Activated CD4-positive, alpha-beta memory T cell treated with anti-CD3 and anti-CD28 coated beads for 36 hours (primary cell): ENCODE measurements at regions of chr12 and their contacts with region 1.

Region 1: GRCh38 chr12:71840231-71840847 is 780 bp downstream of the TBC1D15 start:
- DNase-seq: peak; percentile 18
- H3K4me3 Mint-ChIP-seq: peak overlapping the region; percentile 97
- H3K27ac Mint-ChIP-seq: peak overlapping the region; percentile 99
- H3K4me1 Mint-ChIP-seq: peaks cover 32% of the 10 kb centered on the region
- H3K27me3 Mint-ChIP-seq: no peaks in the 10 kb centered on the region

Region 2: GRCh38 chr12:70242695-70243509 is 1597.4 kb before region 1 on chr12 and contains the start of gene CNOT2:
- CTCF ChIA-PET with region 1: no interaction called
- POLR2A ChIA-PET with region 1: no interaction called
- intact Hi-C with region 1: loop called (anchors 10 kb)
- DNase-seq: peak; percentile 94
- H3K4me3 Mint-ChIP-seq: peak within 1 kb of the TSS; percentile 99
- H3K27ac Mint-ChIP-seq: peak within 1 kb of the TSS; percentile 100
- H3K4me1 Mint-ChIP-seq: peaks cover 55% of the 10 kb centered on the region
- H3K27me3 Mint-ChIP-seq: no peaks in the 10 kb centered on the region
- total RNA-seq, gene CNOT2: 58.4 to 58.5 TPM

Region 3: DNA sequence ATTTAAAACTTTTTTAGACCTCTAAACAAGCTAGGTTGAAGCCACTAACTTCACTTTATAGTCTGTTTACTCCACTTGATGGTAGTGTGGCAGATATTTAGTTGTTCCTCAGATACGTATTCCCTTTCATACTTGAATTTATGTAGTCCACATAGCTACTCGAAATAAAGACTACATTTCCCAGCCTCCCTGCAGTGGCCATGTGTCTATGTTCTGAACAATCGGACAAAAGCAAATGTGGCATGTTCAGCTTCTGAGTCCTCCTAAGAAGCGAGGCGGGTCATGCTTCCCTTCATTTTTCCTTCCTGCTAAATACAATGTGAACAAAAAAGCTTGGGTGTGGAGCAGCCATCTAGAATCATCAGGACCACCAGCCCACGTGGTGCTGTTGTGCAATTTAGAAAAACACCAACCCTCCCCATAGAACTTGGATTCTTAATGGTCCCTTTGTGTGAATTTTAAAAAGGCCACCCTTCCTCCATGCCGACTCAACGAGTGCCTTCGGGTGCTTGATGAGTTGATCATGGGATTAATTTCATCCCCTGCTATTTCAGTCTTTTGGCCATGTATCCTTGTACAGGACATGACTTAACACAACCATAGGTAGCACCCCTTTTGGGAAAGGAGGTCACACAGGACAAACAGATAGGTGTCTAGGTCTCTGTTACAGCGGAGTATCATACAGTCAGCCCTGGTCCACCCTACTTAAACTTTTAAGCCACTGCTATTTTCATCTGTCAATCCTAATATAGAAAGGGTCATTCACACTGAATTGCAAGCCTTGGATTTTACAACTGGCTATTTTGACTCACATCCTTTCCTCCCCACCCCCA is 237.4 kb before region 1 on chr12:
- CTCF ChIA-PET with region 1: no interaction called
- POLR2A ChIA-PET with region 1: no interaction called
- intact Hi-C with region 1: no loop called
- DNase-seq: no peak
- H3K4me3 Mint-ChIP-seq: no peak overlapping the region
- H3K27ac Mint-ChIP-seq: no peak overlapping the region
- H3K4me1 Mint-ChIP-seq: no peaks in the 10 kb centered on the region
- H3K27me3 Mint-ChIP-seq: no peaks in the 10 kb centered on the region

Region 4: DNA sequence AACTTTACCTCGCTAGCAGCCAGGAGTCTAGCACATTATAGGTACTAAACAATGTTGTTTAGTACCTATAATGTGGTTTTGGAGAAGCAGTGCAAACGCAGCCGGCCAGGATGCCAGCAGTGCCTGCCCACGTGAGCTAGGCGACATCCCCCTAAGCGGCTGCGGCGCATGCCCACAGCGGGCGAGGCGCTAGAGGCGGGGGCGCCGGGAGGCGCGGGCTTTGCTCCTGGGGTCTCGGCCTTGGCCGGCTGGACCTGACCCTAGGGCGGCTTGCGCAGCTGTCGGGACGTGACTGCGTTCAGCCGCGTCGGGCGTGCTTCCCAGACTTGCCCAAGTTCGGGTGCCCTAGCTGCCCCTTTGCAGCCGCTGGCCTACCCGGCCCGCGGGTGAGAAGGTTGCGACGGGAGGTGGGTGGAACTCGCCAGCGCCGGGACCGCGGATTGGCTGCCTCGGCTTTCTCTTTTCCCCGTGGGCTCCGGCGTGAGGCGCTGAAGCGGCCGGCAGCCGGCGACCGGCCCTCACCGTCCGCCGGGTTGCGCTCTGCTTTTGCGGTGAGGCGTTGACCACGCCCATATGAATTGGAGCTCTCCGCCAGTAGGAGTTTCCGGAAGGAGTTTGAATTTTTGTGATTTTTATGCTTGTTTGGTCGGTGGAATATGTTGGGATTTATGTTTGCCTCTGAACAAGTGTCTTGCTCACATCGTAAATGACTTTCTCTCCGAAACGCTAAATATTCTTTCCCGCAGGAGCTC is 154.2 kb before region 1 on chr12 and contains the start of gene TMEM19:
- CTCF ChIA-PET with region 1: no interaction called
- POLR2A ChIA-PET with region 1: interaction called, 5 read pairs
- intact Hi-C with region 1: loop called (anchors 2 kb)
- DNase-seq: peak; percentile 87
- H3K4me3 Mint-ChIP-seq: peak within 1 kb of the TSS; percentile 96
- H3K27ac Mint-ChIP-seq: peak within 1 kb of the TSS; percentile 92
- H3K4me1 Mint-ChIP-seq: peaks cover 16% of the 10 kb centered on the region
- H3K27me3 Mint-ChIP-seq: no peaks in the 10 kb centered on the region
- total RNA-seq, gene TMEM19: 10.8 to 11.7 TPM

Region 5: DNA sequence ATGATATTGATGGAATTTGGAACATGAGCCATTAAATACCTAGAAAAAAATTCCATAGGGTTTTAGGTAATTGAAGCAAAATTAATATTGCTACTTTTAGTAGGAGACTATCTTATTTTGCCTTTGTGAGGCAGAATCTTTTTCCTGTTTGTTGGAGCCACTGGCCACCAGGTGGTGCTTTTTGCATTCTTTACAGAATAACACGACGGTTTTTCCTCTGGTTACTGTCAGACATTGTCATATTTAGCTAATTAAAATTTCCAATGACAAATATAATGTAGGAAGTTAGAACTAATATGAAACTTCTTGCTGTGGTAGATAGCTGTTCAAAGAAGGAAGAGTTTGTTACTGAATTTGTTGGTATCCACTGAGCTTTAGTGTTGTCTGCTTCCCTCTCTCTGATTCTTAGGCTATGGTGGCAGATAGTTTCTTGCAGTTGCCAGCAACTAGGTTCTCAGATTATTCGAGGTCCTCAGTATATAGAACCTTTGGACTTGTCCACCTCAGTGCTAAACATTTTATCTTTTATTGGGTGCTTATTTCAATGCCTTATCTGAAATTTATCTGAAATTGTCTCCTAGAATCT is 60.0 kb before region 1 on chr12:
- CTCF ChIA-PET with region 1: interaction called, 29 read pairs
- POLR2A ChIA-PET with region 1: interaction called, 4 read pairs
- intact Hi-C with region 1: loop called (anchors 2 kb)
- DNase-seq: peak; percentile 46
- H3K4me3 Mint-ChIP-seq: no peak overlapping the region
- H3K27ac Mint-ChIP-seq: peak overlapping the region; percentile 4
- H3K4me1 Mint-ChIP-seq: peaks cover 5% of the 10 kb centered on the region
- H3K27me3 Mint-ChIP-seq: no peaks in the 10 kb centered on the region

Region 6: DNA sequence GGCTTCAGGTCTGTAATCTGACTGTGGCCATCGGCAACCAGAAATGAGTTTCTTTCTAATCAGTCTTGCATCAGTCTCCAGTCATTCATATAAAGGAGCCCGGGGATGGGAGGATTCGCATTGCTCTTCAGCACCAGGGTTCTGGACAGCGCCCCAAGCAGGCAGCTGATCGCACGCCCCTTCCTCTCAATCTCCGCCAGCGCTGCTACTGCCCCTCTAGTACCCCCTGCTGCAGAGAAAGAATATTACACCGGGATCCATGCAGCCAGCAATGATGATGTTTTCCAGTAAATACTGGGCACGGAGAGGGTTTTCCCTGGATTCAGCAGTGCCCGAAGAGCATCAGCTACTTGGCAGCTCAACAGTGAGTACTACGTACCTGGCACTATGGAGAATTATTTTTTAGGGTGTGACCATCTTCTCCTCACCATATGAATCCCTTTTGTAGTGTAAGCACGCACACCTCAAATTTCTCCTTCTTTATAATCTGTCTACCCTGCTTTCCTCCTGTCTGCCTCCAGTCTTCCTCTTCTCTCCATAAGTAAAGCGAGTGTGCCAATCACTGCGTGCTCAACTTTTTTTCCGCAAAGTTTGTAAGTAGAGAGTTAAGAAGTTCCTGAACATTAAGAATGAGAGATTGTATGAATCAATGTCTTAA is 98.5 kb after region 1 on chr12 and contains the start of gene TPH2:
- CTCF ChIA-PET with region 1: no interaction called
- POLR2A ChIA-PET with region 1: no interaction called
- intact Hi-C with region 1: loop called (anchors 1 kb)
- DNase-seq: peak; percentile 73
- H3K4me3 Mint-ChIP-seq: no peak within 1 kb of the TSS
- H3K27ac Mint-ChIP-seq: no peak within 1 kb of the TSS
- H3K4me1 Mint-ChIP-seq: peaks cover 6% of the 10 kb centered on the region
- H3K27me3 Mint-ChIP-seq: peaks cover 61% of the 10 kb centered on the region
- total RNA-seq, gene TPH2: not detected

Region 7: GRCh38 chr12:72017054-72017651 is 176.8 kb after region 1 on chr12:
- CTCF ChIA-PET with region 1: no interaction called
- POLR2A ChIA-PET with region 1: no interaction called
- intact Hi-C with region 1: no loop called
- DNase-seq: peak; percentile 74
- H3K4me3 Mint-ChIP-seq: no peak overlapping the region
- H3K27ac Mint-ChIP-seq: no peak overlapping the region
- H3K4me1 Mint-ChIP-seq: no peaks in the 10 kb centered on the region
- H3K27me3 Mint-ChIP-seq: peaks cover 14% of the 10 kb centered on the region